AG04450 (cell line): ENCODE measurements at regions of chr1 and their contacts with region 1.

Region 1: DNA sequence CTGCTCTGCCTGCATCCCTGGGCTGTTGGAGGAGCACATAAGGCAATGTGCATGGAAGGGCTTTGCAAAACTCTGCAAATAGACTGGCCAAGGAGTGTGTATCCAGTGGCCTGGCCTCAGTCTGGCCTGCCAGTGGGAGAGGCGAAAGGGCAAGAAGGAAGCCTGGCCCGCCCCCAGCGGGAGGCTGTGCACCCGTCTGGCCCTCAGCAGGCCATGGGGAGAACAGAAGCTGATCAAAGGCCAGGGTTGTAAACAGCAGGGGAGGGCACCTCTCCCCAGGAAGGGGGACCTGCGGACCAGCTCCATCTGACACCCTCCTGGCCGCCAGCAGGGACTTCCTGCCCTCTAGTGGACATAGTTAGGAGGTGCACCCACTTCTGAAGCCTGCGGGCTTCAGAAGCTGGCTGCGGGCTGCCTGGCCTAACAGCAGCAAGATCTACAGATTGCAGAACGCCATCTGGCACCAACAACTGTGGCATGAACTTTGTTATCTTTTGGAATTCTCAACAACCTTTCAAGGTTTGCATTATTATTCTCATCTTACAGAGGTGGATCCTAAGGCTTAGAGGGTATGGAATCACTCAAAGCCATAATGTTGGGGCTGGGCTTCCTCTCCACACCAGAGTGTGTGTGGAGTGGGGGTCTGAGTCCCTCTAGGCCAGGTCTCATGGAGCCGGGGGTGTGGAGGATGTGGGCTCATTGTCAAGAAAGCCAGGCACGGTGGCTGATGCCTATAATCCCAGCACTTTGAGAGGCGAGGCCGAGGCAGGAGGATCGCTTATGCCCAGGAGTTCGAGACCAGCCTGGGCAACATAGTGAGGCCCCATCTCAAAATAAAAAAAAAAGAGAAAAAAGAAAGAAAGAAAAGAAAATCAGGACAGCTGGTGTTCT is 18.9 kb upstream of the CDK18 start:
- DNase-seq: no peak
- H3K4me3 ChIP-seq: no peak overlapping the region
- H3K27ac ChIP-seq: no peak overlapping the region
- H3K27me3 ChIP-seq: peaks cover 50% of the 10 kb centered on the region
- CTCF ChIP-seq: peak; percentile 93

Region 2: DNA sequence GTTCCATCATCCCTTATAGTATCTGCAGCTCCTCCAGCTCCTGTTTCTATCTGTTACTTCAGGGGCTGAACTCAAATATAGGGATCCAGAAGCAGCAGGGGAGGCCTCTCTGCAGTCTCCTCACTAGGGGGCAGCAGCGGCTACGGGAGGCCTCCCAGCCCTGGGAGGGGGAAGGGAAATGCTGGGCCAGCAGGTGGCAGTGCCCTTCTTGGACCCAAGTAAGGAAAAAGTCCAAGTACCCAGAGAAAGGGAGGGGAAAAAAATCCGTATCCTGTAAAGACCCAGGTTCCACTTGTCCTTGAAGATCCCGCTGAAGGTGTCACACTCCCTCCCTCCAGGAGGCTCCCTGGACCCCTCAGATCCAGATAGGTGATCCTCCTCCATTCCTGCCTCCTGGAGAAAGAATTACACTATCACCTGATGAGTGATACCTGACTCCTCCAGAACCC is 149.9 kb before region 1 on chr1:
- CTCF ChIA-PET with region 1: interaction called, 85 read pairs
- POLR2A ChIA-PET with region 1: no interaction called
- DNase-seq: no peak
- H3K4me3 ChIP-seq: no peak overlapping the region
- H3K27ac ChIP-seq: no peak overlapping the region
- H3K27me3 ChIP-seq: peaks cover 41% of the 10 kb centered on the region
- CTCF ChIP-seq: peak; percentile 98

Region 3: DNA sequence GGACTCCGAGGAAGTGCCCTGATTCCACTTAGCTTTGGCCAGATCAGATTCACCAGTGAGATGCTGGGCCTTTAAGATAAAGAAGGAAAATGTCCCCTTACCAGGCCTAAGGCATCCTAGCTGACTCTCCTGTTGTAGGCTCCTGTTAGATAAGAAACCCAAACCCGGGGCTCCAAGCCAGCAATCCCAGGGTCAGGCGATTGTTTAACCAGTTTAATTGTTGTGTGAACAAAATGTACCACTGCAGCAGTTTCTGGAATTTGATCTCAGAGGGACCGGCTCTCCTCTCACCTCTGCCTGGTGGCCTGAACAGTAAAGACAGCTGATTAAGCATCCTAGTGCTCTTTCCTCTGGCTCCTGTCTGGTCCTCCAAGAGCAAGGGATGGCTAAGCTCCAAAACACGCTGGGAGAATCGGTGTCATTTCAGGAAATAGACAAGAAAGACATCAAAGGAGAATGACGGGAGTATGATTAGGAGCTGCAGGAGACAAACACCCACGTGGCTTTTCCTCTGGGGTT is 119.6 kb before region 1 on chr1:
- CTCF ChIA-PET with region 1: interaction called, 14 read pairs
- POLR2A ChIA-PET with region 1: no interaction called
- DNase-seq: no peak
- H3K4me3 ChIP-seq: no peak overlapping the region
- H3K27ac ChIP-seq: no peak overlapping the region
- H3K27me3 ChIP-seq: peaks cover 4% of the 10 kb centered on the region
- CTCF ChIP-seq: no peak

Region 4: GRCh38 chr1:205430696-205431305 is 54.8 kb before region 1 on chr1:
- CTCF ChIA-PET with region 1: interaction called, 17 read pairs
- POLR2A ChIA-PET with region 1: no interaction called
- DNase-seq: no peak
- H3K4me3 ChIP-seq: peak overlapping the region; percentile 66
- H3K27ac ChIP-seq: no peak overlapping the region
- H3K27me3 ChIP-seq: peaks cover 39% of the 10 kb centered on the region
- CTCF ChIP-seq: peak; percentile 98

Region 5: GRCh38 chr1:205500240-205501233 is 15.0 kb after region 1 on chr1:
- CTCF ChIA-PET with region 1: interaction called, 22 read pairs
- POLR2A ChIA-PET with region 1: no interaction called
- DNase-seq: no peak
- H3K4me3 ChIP-seq: no peak overlapping the region
- H3K27ac ChIP-seq: no peak overlapping the region
- H3K27me3 ChIP-seq: peaks cover 53% of the 10 kb centered on the region
- CTCF ChIP-seq: no peak

Region 6: DNA sequence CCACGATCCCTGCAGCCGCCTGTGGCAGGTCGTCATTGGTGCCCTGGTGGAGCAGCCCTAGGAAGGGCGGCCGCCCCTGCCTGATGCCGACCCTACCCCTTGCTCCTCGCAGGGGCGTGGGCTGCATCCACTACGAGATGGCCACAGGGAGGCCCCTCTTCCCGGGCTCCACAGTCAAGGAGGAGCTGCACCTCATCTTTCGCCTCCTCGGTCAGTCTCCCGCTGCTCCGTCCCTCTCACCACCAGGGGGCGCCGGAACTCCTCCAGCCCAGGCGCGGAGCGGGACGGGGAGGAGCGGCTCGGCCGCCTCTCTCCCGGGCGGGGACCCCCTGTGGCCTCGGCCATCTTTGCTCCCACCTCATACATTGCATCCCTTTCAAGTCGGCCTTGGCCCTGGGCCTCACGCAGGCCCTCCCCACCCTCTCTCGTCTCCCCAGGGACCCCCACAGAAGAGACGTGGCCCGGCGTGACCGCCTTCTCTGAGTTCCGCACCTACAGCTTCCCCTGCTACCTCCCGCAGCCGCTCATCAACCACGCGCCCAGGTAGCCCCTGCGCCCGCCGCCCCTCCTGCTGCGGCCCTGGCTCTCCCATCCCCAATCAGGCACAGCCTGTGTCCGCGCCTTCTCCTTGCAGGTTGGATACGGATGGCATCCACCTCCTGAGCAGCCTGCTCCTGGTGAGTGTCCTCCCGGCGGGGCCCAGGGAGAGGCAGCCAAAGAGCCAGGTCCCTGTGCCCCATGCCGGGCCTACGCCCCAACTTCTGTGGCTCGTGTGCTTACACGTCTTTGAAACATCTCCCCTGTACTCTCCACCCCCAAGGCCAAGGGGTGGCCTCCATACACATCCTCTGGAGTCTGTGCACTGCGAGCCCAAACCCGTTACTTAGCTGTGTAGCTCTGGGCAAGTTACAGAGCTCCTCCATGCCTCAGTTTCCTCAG is 43.6 kb after region 1 on chr1:
- CTCF ChIA-PET with region 1: interaction called, 427 read pairs
- POLR2A ChIA-PET with region 1: interaction called, 4 read pairs
- DNase-seq: peak; percentile 29
- H3K4me3 ChIP-seq: peak overlapping the region; percentile 50
- H3K27ac ChIP-seq: no peak overlapping the region
- H3K27me3 ChIP-seq: peaks cover 13% of the 10 kb centered on the region
- CTCF ChIP-seq: peak; percentile 85